ENCODE measurements at regions of chr2 and their contacts with region 1.

Region 1: DNA sequence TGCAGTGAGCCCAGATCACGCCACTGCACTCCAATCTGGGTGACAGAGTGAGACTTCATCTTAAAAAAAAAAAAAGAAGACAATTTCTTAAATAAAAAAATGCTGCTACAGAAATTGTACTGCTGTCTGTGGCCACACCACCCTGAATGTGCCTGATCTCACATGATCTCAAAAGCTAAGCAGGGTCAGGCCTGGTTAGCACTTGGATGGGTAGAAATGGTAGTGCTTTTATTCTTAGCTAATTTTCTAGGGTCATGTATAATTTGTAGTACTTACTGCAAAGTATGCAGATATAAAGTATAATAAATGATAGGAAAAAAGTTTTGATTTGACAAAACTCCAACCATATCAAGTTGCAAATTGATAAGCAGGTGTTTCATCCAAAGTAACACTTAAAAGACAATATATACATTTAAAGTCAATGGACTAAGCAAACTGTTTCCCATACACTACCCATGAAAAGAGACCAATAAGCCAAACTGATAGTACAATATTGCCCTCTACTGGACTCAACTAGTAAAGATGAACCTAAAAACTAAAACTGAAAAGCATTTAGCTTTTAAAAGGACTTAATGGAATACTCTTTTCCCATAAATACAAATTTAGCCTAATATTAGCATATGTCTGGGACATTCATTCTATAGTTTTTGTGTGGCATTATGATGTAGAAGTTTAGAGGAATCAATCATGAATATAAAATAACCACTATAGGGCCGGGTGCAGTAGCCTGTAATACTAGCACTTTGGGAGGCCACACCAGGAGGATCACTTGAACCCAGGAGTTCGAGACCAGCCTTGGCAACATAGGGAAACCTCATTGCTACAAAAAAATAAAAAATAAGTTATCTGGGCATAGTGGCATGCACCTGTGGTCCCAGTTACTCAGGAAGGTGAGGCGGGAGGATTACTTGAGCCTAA is 18.6 kb upstream of the PEX13 start:
- DNase-seq: no peak
- H3K4me3 Mint-ChIP-seq: no peak overlapping the region
- H3K27ac Mint-ChIP-seq: no peak overlapping the region
- H3K4me1 Mint-ChIP-seq: peaks cover 3% of the 10 kb centered on the region
- H3K27me3 Mint-ChIP-seq: no peaks in the 10 kb centered on the region

Region 2: DNA sequence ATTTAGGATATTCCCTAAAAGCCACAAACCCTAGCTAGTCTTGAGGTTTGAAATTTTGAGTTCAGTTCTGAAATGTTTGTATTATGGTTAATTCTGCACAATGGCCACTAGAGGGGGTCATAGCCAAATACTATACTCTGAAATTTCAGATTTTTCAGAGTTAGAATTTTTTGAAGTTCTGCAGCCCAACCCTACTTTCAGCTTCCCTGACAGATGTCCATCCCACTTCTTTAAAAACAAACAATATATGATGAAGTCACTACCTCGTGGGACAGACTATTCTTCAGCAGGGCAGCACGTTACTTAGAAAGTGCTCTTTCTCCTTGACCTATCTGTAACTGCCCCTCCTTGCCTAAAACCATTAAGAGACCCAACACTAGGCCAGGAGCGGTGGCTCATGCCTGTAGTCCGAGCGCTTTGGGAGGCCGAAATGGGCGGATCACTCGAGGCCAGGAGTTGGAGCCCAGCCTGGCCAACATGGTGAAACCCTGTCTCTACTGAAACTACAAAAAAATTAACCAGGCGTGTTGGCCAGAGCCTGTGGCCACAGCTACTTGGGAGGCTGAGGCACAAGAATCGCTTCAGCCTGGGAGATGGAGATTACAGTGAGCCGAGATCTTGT is 291.0 kb before region 1 on chr2:
- intact Hi-C with region 1: loop called (anchors 1 kb)
- DNase-seq: no peak
- H3K4me3 Mint-ChIP-seq: no peak overlapping the region
- H3K27ac Mint-ChIP-seq: no peak overlapping the region
- H3K4me1 Mint-ChIP-seq: peaks cover 2% of the 10 kb centered on the region
- H3K27me3 Mint-ChIP-seq: peaks cover 7% of the 10 kb centered on the region

Region 3: DNA sequence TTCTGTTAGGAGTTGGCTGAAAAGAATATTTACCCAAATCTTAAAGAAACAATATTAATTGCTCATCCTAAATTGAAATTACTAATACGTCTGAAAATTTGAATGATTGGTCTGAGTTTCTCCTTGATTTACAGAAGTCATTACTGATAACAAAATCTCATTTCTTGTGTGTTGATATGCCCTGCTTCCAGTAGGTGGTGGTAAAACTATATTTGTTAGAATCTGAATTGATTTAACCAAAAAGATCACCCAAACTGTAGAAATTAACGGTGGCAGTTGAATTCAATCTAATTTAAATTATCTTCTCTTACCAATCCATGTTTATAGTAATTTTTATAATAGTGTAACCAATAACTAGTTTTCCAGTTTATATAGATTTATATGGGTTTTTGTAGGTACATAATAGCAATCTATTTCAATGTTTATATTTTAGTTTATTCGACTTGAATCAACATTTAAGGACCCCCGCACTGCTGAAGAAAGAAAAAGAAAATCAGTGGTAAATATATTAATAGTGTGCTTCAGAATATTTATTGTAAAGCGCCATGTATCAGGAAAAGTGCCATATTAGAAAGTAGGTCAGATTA is 204.5 kb before region 1 on chr2:
- intact Hi-C with region 1: loop called (anchors 1 kb)
- DNase-seq: no peak
- H3K4me3 Mint-ChIP-seq: no peak overlapping the region
- H3K27ac Mint-ChIP-seq: no peak overlapping the region
- H3K4me1 Mint-ChIP-seq: peaks cover 16% of the 10 kb centered on the region
- H3K27me3 Mint-ChIP-seq: no peaks in the 10 kb centered on the region

Region 4: GRCh38 chr2:60806988-60807681 is 191.8 kb before region 1 on chr2:
- intact Hi-C with region 1: loop called (anchors 2 kb)
- DNase-seq: no peak
- H3K4me3 Mint-ChIP-seq: peak overlapping the region; percentile 10
- H3K27ac Mint-ChIP-seq: peak overlapping the region; percentile 89
- H3K4me1 Mint-ChIP-seq: peaks cover 48% of the 10 kb centered on the region
- H3K27me3 Mint-ChIP-seq: no peaks in the 10 kb centered on the region

Region 5: GRCh38 chr2:60881047-60881932 is 117.6 kb before region 1 on chr2 and contains the start of gene REL:
- intact Hi-C with region 1: loop called (anchors 1 kb)
- DNase-seq: peak; percentile 87
- H3K4me3 Mint-ChIP-seq: peak within 1 kb of the TSS; percentile 99
- H3K27ac Mint-ChIP-seq: peak within 1 kb of the TSS; percentile 97
- H3K4me1 Mint-ChIP-seq: peaks cover 25% of the 10 kb centered on the region
- H3K27me3 Mint-ChIP-seq: no peaks in the 10 kb centered on the region
- total RNA-seq, gene REL: 118 and 123 TPM in 2 replicates

Region 6: GRCh38 chr2:60926737-60927552 is 71.9 kb before region 1 on chr2:
- intact Hi-C with region 1: loop called (anchors 2 kb)
- DNase-seq: no peak
- H3K4me3 Mint-ChIP-seq: no peak overlapping the region
- H3K27ac Mint-ChIP-seq: peak overlapping the region; percentile 29
- H3K4me1 Mint-ChIP-seq: peaks cover 14% of the 10 kb centered on the region
- H3K27me3 Mint-ChIP-seq: no peaks in the 10 kb centered on the region